Ascending aorta (tissue), 2 donors: ENCODE measurements at regions of chr1 and their contacts with region 1.

Region 1: DNA sequence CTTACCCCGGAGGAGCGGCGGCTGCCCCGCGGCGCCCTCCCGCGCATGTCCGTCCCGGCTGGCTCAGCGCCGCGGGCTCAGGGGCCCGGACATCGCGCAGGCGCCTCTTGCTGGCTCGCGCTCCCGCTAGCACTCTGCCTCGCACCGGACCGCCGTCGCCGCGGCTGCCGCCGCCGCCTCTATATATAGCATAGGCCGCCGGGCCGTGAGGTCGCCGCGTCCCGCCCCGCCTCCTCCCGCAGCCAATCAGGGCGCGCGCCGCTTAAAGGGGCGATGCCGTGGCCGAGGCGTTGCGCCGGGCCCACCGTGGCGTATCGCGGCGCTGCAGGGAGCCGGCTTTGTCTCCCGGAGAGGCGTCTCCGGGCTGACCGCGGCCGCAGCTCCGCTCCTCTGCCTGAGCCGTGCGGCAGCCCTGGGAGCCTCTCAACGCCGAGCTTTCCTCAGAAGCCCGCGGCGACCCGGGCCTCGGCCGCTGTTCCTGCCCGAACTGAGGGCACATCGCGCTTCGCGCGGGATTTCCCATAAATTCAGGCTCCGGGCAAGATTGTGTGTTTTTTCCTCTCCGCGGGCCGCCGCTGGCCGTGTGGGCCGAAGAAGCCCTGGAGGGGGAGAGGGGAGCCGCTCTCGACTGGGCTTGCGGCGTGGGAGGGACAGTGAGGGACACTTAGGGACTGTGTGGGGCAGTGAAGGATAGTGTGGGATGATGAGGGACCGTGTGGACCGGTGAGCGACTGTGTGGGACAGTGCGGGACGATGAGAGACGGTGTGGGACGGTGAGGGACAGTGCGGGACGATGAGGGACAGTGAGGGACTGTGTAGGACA is at the start of gene ERRFI1:
- DNase-seq: peak; percentile 78 to 97
- H3K4me3 ChIP-seq: peak within 1 kb of the TSS; percentile 85 to 94
- H3K27ac ChIP-seq: peak within 1 kb of the TSS; percentile 98 to 99
- H3K4me1 ChIP-seq: peaks cover 0 to 34% of the 10 kb centered on the region in 2 donors
- H3K27me3 ChIP-seq: no peaks in the 10 kb centered on the region
- CTCF ChIP-seq: no peak
- total RNA-seq, gene ERRFI1: 59.7 TPM

Region 2: DNA sequence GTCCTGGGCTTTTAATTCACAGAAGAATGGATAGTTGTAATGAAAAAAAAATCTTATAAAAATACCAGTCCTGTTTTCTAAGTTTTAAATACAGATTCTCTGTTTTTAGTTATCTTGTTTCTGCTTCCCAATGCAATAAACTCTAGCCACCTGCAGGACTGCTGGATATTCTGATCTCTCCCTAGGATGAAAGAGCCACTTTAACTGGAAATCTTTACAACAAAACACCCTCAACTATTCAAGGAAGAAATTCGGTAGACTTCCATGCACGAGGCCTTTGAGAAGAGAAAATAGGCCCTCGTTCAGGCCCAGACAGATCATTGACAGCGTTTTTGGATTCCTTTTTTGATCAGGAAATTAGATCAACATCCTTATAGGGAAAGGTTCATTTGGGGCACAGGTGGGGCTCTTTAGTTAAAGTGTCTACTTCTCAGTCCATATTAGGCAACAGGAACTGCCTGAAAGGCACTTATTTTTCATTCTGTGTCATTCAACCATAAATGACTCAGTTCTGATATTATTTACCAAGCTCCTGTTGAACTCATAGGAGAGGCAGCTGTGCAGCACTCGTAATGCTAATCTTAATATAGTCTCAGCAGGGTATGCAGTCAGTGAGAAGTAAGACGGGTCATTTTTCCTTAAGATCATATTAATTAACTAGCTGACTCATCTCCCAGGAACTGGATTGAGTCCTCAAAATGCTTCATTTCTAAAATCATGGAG is 70.9 kb after region 1 on chr1:
- intact Hi-C with region 1: loop called (anchors 1 kb)
- DNase-seq: no peak
- H3K4me3 ChIP-seq: no peak overlapping the region
- H3K27ac ChIP-seq: peak overlapping the region; percentile 82 to 85
- H3K4me1 ChIP-seq: peaks cover 6 to 22% of the 10 kb centered on the region in 2 donors
- H3K27me3 ChIP-seq: no peaks in the 10 kb centered on the region
- CTCF ChIP-seq: no peak

Region 3: DNA sequence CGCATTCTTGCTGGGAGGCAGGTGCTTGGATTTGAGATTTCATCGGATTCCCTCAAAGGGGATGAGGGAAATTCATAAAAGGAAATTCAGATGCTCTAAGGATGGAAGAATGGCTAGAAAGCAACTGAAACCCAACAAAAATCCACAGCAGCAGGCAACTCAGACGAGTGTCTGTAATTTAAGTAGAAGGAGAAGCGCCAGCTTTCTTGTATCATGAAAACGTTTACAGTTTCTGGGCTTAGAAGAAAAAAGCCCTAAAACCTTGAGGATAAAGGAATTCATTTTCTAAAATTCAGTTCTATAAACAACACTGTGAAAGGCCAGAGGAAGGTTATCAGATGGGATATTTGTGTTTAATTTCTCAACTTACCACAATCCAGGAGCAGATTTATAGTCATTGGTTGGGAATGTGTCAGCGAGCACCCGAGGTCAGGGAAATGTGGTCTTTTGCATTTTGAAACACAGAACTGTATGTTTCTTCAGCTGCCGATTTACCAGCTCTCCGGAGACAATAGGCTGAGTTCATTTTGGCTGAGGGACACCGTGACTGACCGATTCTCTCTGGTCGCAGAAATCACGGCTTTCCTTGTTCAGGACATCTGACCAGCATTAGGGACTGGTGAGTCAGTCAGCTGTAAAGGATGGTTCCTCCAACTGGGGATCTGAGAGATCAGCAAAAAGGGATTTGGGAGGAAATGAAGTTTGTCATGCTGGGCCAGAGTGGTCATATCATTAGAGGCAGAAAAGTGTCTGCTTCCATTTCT is 111.3 kb after region 1 on chr1:
- intact Hi-C with region 1: loop called (anchors 5 kb)
- DNase-seq: peak; percentile 32 to 85
- H3K4me3 ChIP-seq: peak overlapping the region in 1 of 2 donors; percentile 25
- H3K27ac ChIP-seq: peak overlapping the region; percentile 81 to 95
- H3K4me1 ChIP-seq: peaks cover 19 to 35% of the 10 kb centered on the region in 2 donors
- H3K27me3 ChIP-seq: no peaks in the 10 kb centered on the region
- CTCF ChIP-seq: no peak

Region 4: DNA sequence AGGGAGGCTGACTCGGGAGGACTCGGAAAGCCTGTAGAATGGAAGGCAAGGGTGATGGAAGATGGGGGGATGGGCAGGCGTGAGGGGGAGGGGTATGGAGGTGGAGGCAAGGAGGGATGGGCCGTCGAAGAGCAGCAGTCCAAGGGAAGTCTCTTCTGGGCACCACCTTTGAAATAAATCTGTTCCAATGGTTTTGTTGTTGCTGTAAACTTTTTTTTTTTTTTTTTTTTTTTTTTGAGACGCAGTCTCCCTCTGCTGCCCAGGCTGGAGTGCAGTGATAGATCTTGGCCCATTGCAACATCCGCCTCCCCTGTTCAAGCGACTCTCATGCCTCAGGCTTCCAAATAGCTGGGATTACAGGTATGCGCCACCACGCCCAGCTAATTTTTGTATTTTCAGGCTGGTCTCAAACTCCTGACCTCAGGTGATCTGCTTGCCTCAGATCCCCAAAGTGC is 212.5 kb after region 1 on chr1:
- intact Hi-C with region 1: loop called (anchors 5 kb)
- DNase-seq: no peak
- H3K4me3 ChIP-seq: no peak overlapping the region
- H3K27ac ChIP-seq: no peak overlapping the region
- H3K4me1 ChIP-seq: no peaks in the 10 kb centered on the region
- H3K27me3 ChIP-seq: no peaks in the 10 kb centered on the region
- CTCF ChIP-seq: peak in 2 of 3 experiments; percentile 18 to 39

Region 5: DNA sequence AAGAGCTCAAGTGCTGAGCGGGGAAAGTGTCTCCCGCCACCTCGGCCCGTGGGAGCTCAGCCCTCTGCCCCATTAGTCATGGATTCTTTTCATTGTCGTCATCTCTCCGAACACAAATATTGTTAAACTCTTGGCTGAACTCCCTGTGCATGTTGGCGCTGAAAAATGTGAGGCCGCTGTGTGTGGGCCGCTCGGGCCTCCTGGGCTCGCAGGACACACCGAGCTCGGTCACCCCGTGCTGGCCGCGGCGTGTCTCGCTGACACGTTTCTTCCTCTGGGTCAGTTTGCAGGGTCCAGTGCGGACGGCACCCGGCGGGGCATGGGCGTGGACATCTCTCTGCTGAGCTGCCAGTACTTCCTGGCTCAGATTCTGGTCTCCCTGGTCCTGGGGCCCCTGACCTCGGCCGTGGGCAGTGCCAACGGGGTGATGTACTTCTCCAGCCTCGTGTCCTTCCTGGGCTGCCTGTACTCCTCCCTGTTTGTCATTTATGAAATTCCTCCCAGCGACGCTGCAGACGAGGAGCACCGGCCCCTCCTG is 317.2 kb after region 1 on chr1:
- intact Hi-C with region 1: loop called (anchors 2 kb)
- DNase-seq: peak; percentile 48 to 96
- H3K4me3 ChIP-seq: peak overlapping the region in 1 of 2 donors; percentile 41
- H3K27ac ChIP-seq: peak overlapping the region; percentile 96
- H3K4me1 ChIP-seq: peaks cover 9 to 17% of the 10 kb centered on the region in 2 donors
- H3K27me3 ChIP-seq: no peaks in the 10 kb centered on the region
- CTCF ChIP-seq: no peak